GM13976 (cell line): ENCODE measurements at regions of chr20 and their contacts with region 1.

Region 1: DNA sequence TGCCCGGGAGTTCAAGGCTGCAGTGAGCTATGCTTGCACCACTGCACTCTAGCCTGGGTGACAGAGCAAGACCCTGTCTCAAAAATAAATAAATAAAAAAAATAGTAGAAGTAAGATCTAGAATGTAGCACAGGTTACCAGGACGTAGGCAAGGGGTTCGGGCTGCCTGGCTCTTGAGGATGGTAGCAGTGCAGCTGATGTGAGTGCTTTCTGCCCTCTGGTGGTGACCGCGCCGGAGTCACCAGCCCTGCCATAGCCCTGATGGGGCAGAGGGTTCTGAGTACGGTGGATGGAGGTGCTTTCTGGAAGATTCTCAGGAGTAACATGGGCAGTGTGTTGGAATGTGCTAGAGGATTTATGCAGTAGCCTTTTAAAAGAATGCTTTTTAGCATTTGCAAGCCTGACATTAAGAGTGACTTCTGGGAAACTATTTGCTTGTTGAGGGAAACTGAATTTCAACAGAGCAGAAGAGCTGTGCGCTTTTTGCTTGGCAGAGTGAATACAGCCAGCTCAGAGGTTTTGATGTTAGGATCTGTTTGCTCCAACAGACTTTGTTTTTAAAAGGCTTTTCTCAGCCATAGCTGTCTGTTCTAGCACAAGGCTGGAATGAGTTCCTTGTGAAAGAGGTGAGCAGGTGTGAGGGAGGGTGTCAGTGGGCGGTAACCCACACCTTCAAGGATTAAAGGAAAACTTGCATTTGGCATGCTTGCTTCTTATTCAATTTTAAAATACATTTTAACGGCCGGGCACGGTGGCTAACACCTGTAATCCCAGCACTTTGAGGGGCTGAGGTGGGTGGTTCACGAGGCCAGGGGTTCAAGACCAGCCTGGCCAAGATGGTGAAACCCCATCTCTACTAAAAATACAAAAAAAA is 65.9 kb downstream of the PTPN1 start:
- DNase-seq: no peak
- CTCF ChIP-seq: peak; percentile 74

Region 2: GRCh38 chr20:50189681-50190582 is 386.2 kb before region 1 on chr20:
- in situ Hi-C with region 1: loop called (anchors 10 kb)
- DNase-seq: peak; percentile 93
- CTCF ChIP-seq: peak; percentile 40